GM10248 (cell line): ENCODE measurements at regions of chr11 and their contacts with region 1.

Region 1: DNA sequence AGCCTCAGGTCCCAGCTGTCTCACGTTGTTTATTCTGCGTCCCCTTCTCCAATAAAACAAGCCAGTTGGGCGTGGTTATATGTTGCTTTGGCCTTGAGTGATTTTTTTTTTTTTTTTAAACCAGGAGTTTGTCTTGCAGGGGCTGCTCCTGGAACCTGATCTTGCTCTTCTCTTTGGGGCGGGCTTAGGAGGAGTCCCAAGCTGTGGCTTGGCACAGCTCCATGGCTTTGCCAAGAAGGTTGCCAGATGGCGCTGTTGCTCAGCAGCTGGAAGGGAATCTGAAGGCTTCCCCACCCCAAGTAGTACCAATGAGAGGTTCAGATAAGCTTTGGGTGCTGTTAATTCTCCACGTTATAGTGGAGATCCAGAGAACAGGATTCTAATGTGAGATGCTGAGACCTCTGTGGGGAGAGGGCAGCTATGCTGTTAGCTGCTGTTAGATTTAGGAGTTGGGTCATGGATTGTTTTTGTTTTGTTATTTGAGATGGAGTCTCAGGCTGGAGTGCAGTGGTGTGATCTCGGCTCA is 2.0 kb upstream of the FERMT3 start:
- DNase-seq: peak; percentile 83
- CTCF ChIP-seq: peak; percentile 84

Region 2: GRCh38 chr11:64000026-64000739 is 204.3 kb before region 1 on chr11:
- CTCF ChIA-PET with region 1: interaction called, 15 read pairs
- POLR2A ChIA-PET with region 1: no interaction called
- DNase-seq: peak; percentile 90
- CTCF ChIP-seq: peak; percentile 87

Region 3: GRCh38 chr11:64216879-64217278 is 12.4 kb after region 1 on chr11:
- CTCF ChIA-PET with region 1: interaction called, 368 read pairs
- POLR2A ChIA-PET with region 1: interaction called, 10 read pairs
- DNase-seq: no peak
- CTCF ChIP-seq: no peak

Region 4: GRCh38 chr11:64240394-64241174 is 36.1 kb after region 1 on chr11 and contains the start of gene FKBP2:
- CTCF ChIA-PET with region 1: interaction called, 368 read pairs
- POLR2A ChIA-PET with region 1: interaction called, 8 read pairs
- DNase-seq: peak; percentile 93
- CTCF ChIP-seq: no peak

Region 5: GRCh38 chr11:64269380-64270234 is 65.1 kb after region 1 on chr11:
- CTCF ChIA-PET with region 1: interaction called, 23 read pairs
- POLR2A ChIA-PET with region 1: interaction called, 8 read pairs
- DNase-seq: peak; percentile 91
- CTCF ChIP-seq: no peak